AG04450 (cell line): ENCODE measurements at regions of chr16 and their contacts with region 1.

Region 1: DNA sequence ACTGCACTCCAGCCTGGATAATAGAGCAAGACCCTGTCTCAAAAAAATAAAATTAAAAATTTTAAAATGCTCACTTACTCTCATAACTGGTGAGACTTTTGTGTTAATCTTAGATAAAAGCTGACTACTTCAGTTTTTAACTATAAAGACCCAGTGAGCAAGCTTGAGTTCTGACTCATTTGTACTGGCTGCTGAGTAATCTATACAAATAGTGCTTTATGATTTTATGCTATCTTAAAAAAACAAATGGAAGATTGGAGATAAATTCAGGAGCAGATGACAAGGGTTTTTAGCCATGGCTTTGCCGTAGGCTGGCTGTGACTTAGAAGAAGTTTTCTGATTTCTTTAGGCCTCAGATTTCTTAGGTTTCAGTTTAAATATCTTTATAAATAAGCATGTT is 30.5 kb downstream of the SNTB2 start:
- DNase-seq: peak; percentile 37
- H3K4me3 ChIP-seq: no peak overlapping the region
- H3K27ac ChIP-seq: peak overlapping the region; percentile 52
- H3K27me3 ChIP-seq: no peaks in the 10 kb centered on the region
- CTCF ChIP-seq: no peak

Region 2: DNA sequence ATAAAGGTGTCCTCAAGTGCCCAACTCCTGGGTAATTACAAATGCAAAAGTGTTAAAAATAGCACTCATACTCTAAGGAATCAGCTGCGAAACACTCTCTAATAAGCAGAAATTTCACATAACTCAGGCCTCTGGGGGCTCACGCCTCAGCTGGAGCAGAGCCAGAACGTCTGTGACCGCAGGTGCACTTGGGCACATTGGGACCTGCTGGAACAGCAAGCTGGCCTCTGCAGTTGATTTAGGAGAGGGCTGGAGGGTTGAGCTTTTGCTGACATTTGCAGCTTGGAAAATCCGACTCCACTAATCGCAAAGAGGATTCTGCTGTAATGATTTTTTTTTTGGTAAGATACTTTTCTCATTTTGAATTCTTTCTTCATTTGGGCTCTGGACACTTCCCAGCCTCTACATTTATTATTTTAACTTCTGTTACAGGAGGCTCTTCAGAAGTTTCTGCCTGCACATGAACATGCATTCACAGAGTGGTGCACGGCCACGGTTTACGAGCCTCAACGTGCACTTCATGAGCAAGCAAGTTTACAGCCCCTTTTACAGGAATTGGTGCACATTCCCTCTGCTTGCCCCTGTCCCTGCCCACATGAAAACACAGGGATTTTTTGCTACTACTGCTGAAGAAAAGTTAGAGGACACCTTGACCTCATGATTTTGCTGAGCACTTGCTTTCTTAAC is 34.6 kb before region 1 on chr16:
- CTCF ChIA-PET with region 1: no interaction called
- POLR2A ChIA-PET with region 1: no interaction called
- DNase-seq: no peak
- H3K4me3 ChIP-seq: no peak overlapping the region
- H3K27ac ChIP-seq: no peak overlapping the region
- H3K27me3 ChIP-seq: no peaks in the 10 kb centered on the region
- CTCF ChIP-seq: no peak

Region 3: GRCh38 chr16:69204172-69204571 is 13.3 kb before region 1 on chr16:
- CTCF ChIA-PET with region 1: no interaction called
- POLR2A ChIA-PET with region 1: interaction called, 13 read pairs
- DNase-seq: no peak
- H3K4me3 ChIP-seq: no peak overlapping the region
- H3K27ac ChIP-seq: no peak overlapping the region
- H3K27me3 ChIP-seq: no peaks in the 10 kb centered on the region
- CTCF ChIP-seq: no peak

Region 4: GRCh38 chr16:69381231-69381630 is 163.8 kb after region 1 on chr16:
- CTCF ChIA-PET with region 1: no interaction called
- POLR2A ChIA-PET with region 1: no interaction called
- DNase-seq: no peak
- H3K4me3 ChIP-seq: no peak overlapping the region
- H3K27ac ChIP-seq: no peak overlapping the region
- H3K27me3 ChIP-seq: no peaks in the 10 kb centered on the region
- CTCF ChIP-seq: no peak